ENCODE measurements at regions of chr6 and their contacts with region 1.

Region 1: GRCh38 chr6:3732345-3733141 is 19.0 kb downstream of the PXDC1 start:
- DNase-seq: peak; percentile 75
- ATAC-seq: peak; percentile 77
- H3K4me3 Mint-ChIP-seq: no peak overlapping the region
- H3K27ac Mint-ChIP-seq: no peak overlapping the region
- H3K4me1 Mint-ChIP-seq: peaks cover 1% of the 10 kb centered on the region
- H3K27me3 Mint-ChIP-seq: peaks cover 12% of the 10 kb centered on the region
- CTCF ChIP-seq: peak; percentile 93

Region 2: GRCh38 chr6:3281631-3282475 is 450.7 kb before region 1 on chr6:
- CTCF ChIA-PET with region 1: interaction called, 89 read pairs
- POLR2A ChIA-PET with region 1: no interaction called
- intact Hi-C with region 1: loop called (anchors 1 kb)
- DNase-seq: no peak
- ATAC-seq: no peak
- H3K4me3 Mint-ChIP-seq: no peak overlapping the region
- H3K27ac Mint-ChIP-seq: no peak overlapping the region
- H3K4me1 Mint-ChIP-seq: peaks cover 3% of the 10 kb centered on the region
- H3K27me3 Mint-ChIP-seq: no peaks in the 10 kb centered on the region
- CTCF ChIP-seq: no peak

Region 3: GRCh38 chr6:3410385-3411360 is 321.9 kb before region 1 on chr6:
- CTCF ChIA-PET with region 1: interaction called, 18 read pairs
- POLR2A ChIA-PET with region 1: no interaction called
- intact Hi-C with region 1: loop called (anchors 5 kb)
- DNase-seq: peak; percentile 80
- ATAC-seq: peak; percentile 66
- H3K4me3 Mint-ChIP-seq: no peak overlapping the region
- H3K27ac Mint-ChIP-seq: no peak overlapping the region
- H3K4me1 Mint-ChIP-seq: peaks cover 4% of the 10 kb centered on the region
- H3K27me3 Mint-ChIP-seq: no peaks in the 10 kb centered on the region
- CTCF ChIP-seq: peak; percentile 75

Region 4: GRCh38 chr6:3721810-3722626 is 10.5 kb before region 1 on chr6:
- CTCF ChIA-PET with region 1: interaction called, 18 read pairs
- POLR2A ChIA-PET with region 1: no interaction called
- intact Hi-C with region 1: no loop called
- DNase-seq: no peak
- ATAC-seq: no peak
- H3K4me3 Mint-ChIP-seq: no peak overlapping the region
- H3K27ac Mint-ChIP-seq: no peak overlapping the region
- H3K4me1 Mint-ChIP-seq: peaks cover 23% of the 10 kb centered on the region
- H3K27me3 Mint-ChIP-seq: no peaks in the 10 kb centered on the region
- CTCF ChIP-seq: no peak

Region 5: DNA sequence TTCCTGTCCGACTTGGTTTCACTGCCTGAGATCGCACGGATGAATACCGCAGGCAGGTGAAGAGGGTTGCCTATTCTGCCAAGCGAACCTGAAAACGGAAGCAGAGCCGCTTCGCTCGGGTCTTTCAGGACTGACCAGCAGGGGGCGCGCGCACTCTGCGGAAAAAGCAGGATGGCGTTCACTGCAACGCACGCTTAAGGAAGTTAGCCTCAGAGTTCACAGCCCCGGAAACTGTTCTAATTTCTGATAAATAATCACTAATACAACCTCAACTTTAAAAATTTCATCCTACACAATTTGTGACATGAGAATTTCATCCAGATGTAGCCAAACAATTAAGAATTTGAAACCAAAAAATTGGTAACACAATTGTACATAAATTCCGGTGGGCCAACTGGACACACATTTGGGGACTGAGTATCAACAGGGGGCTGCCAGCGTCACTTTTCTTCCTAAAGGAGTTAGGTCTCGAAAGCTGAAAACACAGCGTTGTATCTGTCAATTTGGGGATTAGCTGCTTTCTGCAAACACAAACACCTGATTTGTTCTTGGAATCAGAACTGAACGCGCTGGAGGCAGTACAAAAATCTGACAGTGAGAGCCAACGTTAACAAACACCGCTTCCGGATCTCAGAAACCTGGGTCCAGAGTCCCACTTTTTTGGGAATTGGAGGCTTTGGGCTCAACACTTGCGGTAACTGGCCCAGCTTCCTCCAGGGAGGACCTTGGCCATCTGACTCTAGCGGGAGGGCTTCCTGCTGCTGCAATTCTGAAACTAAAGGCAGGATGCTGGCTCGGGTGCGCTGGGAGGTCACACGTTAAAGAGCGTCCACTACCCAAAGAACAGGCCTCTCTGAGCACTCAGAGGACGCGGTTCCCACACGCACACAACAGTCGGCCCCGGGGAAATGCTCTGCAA is 10.1 kb after region 1 on chr6:
- CTCF ChIA-PET with region 1: interaction called, 21 read pairs
- POLR2A ChIA-PET with region 1: no interaction called
- intact Hi-C with region 1: no loop called
- DNase-seq: peak; percentile 90
- ATAC-seq: peak; percentile 92
- H3K4me3 Mint-ChIP-seq: no peak overlapping the region
- H3K27ac Mint-ChIP-seq: peak overlapping the region; percentile 20
- H3K4me1 Mint-ChIP-seq: peaks cover 7% of the 10 kb centered on the region
- H3K27me3 Mint-ChIP-seq: peaks cover 10% of the 10 kb centered on the region
- CTCF ChIP-seq: peak; percentile 94

Region 6: GRCh38 chr6:3748208-3749066 is 15.9 kb after region 1 on chr6:
- CTCF ChIA-PET with region 1: interaction called, 21 read pairs
- POLR2A ChIA-PET with region 1: no interaction called
- intact Hi-C with region 1: no loop called
- DNase-seq: peak; percentile 56
- ATAC-seq: peak; percentile 63
- H3K4me3 Mint-ChIP-seq: no peak overlapping the region
- H3K27ac Mint-ChIP-seq: no peak overlapping the region
- H3K4me1 Mint-ChIP-seq: no peaks in the 10 kb centered on the region
- H3K27me3 Mint-ChIP-seq: peaks cover 25% of the 10 kb centered on the region
- CTCF ChIP-seq: peak; percentile 42

Region 7: DNA sequence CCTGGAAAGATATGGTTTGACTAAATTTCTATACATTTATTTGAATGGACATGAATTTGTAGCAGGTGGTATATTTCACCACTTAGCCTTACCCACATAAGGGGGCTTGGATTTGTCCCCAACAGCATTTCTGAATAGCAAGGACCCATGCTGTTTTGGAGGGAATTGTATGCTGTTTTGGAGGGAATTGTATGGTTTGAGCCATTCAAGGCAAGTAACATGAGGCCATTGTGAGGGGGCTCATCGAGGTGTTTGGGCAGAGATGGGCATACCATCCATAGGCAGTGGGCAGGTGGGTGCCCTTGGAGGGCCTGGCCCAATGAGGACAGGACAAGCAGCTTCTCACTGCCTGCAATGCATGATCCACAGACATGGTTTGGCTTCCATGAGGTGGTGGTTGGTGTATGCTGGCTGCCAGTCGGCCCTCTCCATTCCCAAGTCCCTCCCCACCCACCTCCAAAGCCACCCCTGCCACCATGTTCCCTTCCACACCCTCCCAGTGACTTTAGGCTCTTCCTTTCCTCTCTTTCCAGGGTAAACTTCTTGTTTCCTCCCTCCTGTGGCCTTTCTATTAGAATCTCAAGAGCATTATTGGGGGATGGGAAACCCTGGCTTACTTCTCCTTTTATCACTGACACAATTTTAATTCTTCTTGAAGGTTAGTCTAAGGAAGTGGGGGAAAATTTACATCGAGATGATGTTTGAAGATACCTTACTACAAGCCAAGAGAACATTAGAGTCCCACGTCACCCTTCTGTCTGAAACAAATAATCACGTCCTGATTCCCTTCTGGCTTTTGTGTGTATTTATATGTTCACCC is 32.2 kb after region 1 on chr6:
- CTCF ChIA-PET with region 1: no interaction called
- POLR2A ChIA-PET with region 1: no interaction called
- intact Hi-C with region 1: no loop called
- DNase-seq: no peak
- ATAC-seq: no peak
- H3K4me3 Mint-ChIP-seq: no peak overlapping the region
- H3K27ac Mint-ChIP-seq: no peak overlapping the region
- H3K4me1 Mint-ChIP-seq: no peaks in the 10 kb centered on the region
- H3K27me3 Mint-ChIP-seq: peaks cover 22% of the 10 kb centered on the region
- CTCF ChIP-seq: no peak